CD8-positive, alpha-beta T cell (primary cell): ENCODE measurements at regions of chr12 and their contacts with region 1.

Region 1: GRCh38 chr12:96578526-96579125 is 89.2 kb downstream of the CFAP54 start:
- DNase-seq: peak in 3 of 9 experiments; percentile 4 to 76 (median 68)
- ATAC-seq: peak; percentile 81
- H3K4me3 ChIP-seq: no peak overlapping the region
- H3K4me3 Mint-ChIP-seq: no peak overlapping the region
- H3K27ac ChIP-seq: no peak overlapping the region
- H3K27ac Mint-ChIP-seq: no peak overlapping the region
- H3K4me1 ChIP-seq: no peaks in the 10 kb centered on the region
- H3K4me1 Mint-ChIP-seq: no peaks in the 10 kb centered on the region
- H3K27me3 ChIP-seq: no peaks in the 10 kb centered on the region
- H3K27me3 Mint-ChIP-seq: peaks cover 5% of the 10 kb centered on the region
- CTCF ChIP-seq: peak; percentile 80

Region 2: GRCh38 chr12:96606644-96607295 is 28.1 kb after region 1 on chr12:
- CTCF ChIA-PET with region 1: no interaction called
- POLR2A ChIA-PET with region 1: no interaction called
- intact Hi-C with region 1: no loop called
- DNase-seq: no peak
- ATAC-seq: no peak
- H3K4me3 ChIP-seq: no peak overlapping the region
- H3K4me3 Mint-ChIP-seq: no peak overlapping the region
- H3K27ac ChIP-seq: no peak overlapping the region
- H3K27ac Mint-ChIP-seq: no peak overlapping the region
- H3K4me1 ChIP-seq: no peaks in the 10 kb centered on the region
- H3K4me1 Mint-ChIP-seq: no peaks in the 10 kb centered on the region
- H3K27me3 ChIP-seq: no peaks in the 10 kb centered on the region
- H3K27me3 Mint-ChIP-seq: peaks cover 46% of the 10 kb centered on the region
- CTCF ChIP-seq: no peak

Region 3: GRCh38 chr12:96985480-96986362 is 407.1 kb after region 1 on chr12:
- CTCF ChIA-PET with region 1: interaction called, 4 read pairs
- POLR2A ChIA-PET with region 1: no interaction called
- intact Hi-C with region 1: loop called (anchors 1 to 2 kb)
- DNase-seq: peak; percentile 16 to 70 (median 34)
- ATAC-seq: peak; percentile 93
- H3K4me3 ChIP-seq: peak overlapping the region; percentile 42 to 51
- H3K4me3 Mint-ChIP-seq: peak overlapping the region; percentile 79
- H3K27ac ChIP-seq: no peak overlapping the region
- H3K27ac Mint-ChIP-seq: no peak overlapping the region
- H3K4me1 ChIP-seq: peaks cover 12% of the 10 kb centered on the region
- H3K4me1 Mint-ChIP-seq: peaks cover 5% of the 10 kb centered on the region
- H3K27me3 ChIP-seq: peaks cover 0 to 3% of the 10 kb centered on the region in 2 experiments
- H3K27me3 Mint-ChIP-seq: peaks cover 20% of the 10 kb centered on the region
- CTCF ChIP-seq: peak; percentile 85

Region 4: GRCh38 chr12:97960754-97961608 is 1382.4 kb after region 1 on chr12:
- CTCF ChIA-PET with region 1: no interaction called
- POLR2A ChIA-PET with region 1: no interaction called
- intact Hi-C with region 1: loop called in 1 of 2 experiments (anchors 5 kb)
- DNase-seq: peak in 2 of 9 experiments; percentile 10 to 22
- ATAC-seq: no peak
- H3K4me3 ChIP-seq: no peak overlapping the region
- H3K4me3 Mint-ChIP-seq: no peak overlapping the region
- H3K27ac ChIP-seq: no peak overlapping the region
- H3K27ac Mint-ChIP-seq: no peak overlapping the region
- H3K4me1 ChIP-seq: no peaks in the 10 kb centered on the region
- H3K4me1 Mint-ChIP-seq: no peaks in the 10 kb centered on the region
- H3K27me3 ChIP-seq: no peaks in the 10 kb centered on the region
- H3K27me3 Mint-ChIP-seq: no peaks in the 10 kb centered on the region
- CTCF ChIP-seq: peak; percentile 19

Region 5: DNA sequence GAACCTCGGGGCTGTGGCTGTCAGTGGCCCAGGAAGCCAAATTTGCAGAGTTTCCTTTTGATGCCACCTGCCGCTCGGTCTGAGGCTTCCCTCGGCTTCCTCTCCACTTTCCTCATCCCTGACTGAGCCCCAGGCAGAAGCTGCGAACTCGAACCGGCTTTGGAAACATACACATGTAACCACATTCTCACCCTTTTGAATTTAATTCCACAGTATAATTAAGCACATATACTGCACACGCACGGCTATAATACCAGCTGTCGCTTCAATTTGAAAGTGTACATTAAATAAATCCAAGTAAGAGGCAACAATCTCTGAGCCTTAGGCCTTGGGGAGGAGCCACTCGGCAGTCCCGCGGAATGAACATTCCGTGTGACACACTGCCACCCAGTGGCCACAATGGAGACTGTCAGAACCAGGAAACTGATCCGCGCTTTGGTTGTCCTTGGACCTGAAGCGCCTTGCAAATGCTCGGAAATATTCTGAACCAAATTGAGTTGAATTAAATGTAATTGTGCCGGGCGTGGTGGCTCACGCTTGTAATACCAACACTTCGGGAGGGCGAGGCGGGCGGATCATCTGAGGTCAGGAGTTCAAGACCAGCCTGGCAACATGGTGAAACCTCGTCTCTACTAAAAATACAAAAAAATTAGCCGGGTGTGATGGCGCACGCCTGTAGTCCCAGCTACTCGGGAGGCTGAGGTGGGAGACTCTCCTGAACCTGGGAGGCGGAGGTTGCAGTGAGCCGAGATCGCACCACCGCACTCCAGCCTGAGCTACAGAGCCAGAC is 1818.9 kb after region 1 on chr12:
- CTCF ChIA-PET with region 1: interaction called, 7 read pairs
- POLR2A ChIA-PET with region 1: no interaction called
- intact Hi-C with region 1: loop called (anchors 1 kb)
- DNase-seq: peak; percentile 57 to 88 (median 79)
- ATAC-seq: peak; percentile 92
- H3K4me3 ChIP-seq: peak overlapping the region; percentile 33 to 47
- H3K4me3 Mint-ChIP-seq: peak overlapping the region; percentile 85
- H3K27ac ChIP-seq: peak overlapping the region in 1 of 2 experiments; percentile 44
- H3K27ac Mint-ChIP-seq: peak overlapping the region; percentile 49
- H3K4me1 ChIP-seq: peaks cover 12% of the 10 kb centered on the region
- H3K4me1 Mint-ChIP-seq: peaks cover 21% of the 10 kb centered on the region
- H3K27me3 ChIP-seq: no peaks in the 10 kb centered on the region
- H3K27me3 Mint-ChIP-seq: no peaks in the 10 kb centered on the region
- CTCF ChIP-seq: peak; percentile 94